ENCODE measurements at regions of chr15 and their contacts with region 1.

Region 1: DNA sequence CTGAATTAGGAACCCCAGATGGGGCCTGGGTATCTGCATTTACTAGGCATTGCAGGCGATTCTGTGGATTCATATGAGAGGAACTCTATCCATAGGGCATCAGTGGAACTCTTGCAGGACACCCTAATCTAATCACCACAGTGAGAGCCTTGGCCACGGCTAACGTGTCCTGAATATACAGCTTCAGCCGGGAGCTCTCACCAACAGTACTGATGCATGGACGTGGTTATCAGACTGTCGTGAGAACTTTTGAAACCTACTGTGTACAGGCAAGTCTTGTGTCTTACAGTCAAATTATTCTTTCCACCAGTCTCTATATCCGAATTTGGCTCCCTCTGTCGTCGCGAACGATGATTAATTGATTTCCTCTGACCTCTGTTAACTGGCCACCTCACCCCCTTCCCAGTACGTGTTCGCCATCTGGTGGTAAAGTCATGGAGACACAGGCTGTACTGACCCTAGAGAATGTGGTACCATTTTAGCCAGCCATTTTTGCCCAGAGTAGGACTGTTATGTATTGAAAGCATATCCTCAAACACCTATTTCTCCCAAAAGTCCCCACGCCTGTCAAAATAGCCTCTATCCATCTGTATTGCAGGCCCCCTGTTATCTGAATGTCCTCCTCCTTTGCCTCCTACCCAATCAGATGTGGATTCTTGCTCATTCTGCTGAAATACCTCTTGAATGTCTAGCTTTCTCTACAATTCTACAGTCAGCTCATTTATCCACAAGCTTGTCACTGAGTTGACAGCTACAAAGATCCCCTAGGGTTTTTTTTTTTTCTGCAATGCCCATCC is 39.7 kb downstream of the GLDN start:
- DNase-seq: peak; percentile 67
- H3K4me3 ChIP-seq: no peak overlapping the region
- H3K27ac ChIP-seq: no peak overlapping the region
- H3K4me1 ChIP-seq: no peaks in the 10 kb centered on the region
- H3K27me3 ChIP-seq: peaks cover 40 to 59% of the 10 kb centered on the region in 2 experiments
- CTCF ChIP-seq: peak; percentile 82 to 87
- POLR2A ChIP-seq: no peak

Region 2: DNA sequence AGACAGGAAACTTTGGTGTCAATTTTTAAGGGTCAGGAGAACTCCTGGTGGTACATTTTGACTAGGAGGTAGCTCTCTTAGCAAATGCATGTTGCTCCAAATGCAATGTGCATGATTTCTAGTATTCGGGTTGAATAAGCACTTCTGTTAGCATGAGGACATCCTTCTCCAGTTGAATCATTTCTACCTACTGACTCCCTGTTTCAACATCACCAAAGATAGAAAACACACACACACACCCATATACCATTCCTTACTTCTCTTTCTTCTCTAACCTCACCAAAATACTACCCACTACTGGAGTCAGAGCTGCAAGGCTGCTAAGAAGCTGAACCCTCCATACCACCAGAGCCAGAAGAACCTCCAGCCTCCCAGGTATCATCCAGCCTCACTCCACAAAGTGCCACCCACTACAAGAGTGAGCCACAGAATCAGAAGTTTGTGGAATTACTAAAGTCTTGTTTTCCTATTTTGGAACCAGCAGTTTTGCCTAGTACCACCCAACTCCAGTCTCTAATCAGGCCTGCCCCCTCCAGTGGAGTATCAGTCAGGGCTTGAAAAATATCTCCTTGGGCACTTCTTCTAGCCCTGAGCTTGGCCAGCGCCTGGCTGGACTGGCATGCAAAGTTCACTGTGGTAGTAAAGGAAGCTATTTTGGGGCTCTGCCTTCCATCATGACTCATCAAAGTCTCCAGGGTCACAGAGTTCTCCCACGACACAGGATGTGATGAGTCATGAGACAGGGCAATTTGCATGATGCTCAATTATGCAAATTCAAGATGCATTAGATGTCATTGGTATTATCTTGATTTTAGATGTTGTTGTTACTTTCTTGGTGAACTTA is 153.0 kb before region 1 on chr15:
- CTCF ChIA-PET with region 1: interaction called, 78 read pairs
- POLR2A ChIA-PET with region 1: no interaction called
- dilution Hi-C with region 1: no loop called
- intact Hi-C with region 1: loop called (anchors 1 kb)
- DNase-seq: peak; percentile 60
- H3K4me3 ChIP-seq: no peak overlapping the region
- H3K27ac ChIP-seq: peak overlapping the region; percentile 11
- H3K4me1 ChIP-seq: peaks cover 27% of the 10 kb centered on the region
- H3K27me3 ChIP-seq: peaks cover 21 to 24% of the 10 kb centered on the region in 2 experiments
- CTCF ChIP-seq: no peak
- POLR2A ChIP-seq: no peak

Region 3: GRCh38 chr15:51335538-51336321 is 45.5 kb before region 1 on chr15:
- CTCF ChIA-PET with region 1: interaction called, 6 read pairs
- POLR2A ChIA-PET with region 1: no interaction called
- dilution Hi-C with region 1: no loop called
- intact Hi-C with region 1: loop called (anchors 2 kb)
- DNase-seq: no peak
- H3K4me3 ChIP-seq: no peak overlapping the region
- H3K27ac ChIP-seq: no peak overlapping the region
- H3K4me1 ChIP-seq: peaks cover 16% of the 10 kb centered on the region
- H3K27me3 ChIP-seq: peaks cover 85 to 87% of the 10 kb centered on the region in 2 experiments
- CTCF ChIP-seq: no peak
- POLR2A ChIP-seq: no peak

Region 4: GRCh38 chr15:51401872-51402517 is 20.8 kb after region 1 on chr15:
- CTCF ChIA-PET with region 1: interaction called, 11 read pairs
- POLR2A ChIA-PET with region 1: no interaction called
- dilution Hi-C with region 1: no loop called
- intact Hi-C with region 1: no loop called
- DNase-seq: peak; percentile 13
- H3K4me3 ChIP-seq: no peak overlapping the region
- H3K27ac ChIP-seq: no peak overlapping the region
- H3K4me1 ChIP-seq: no peaks in the 10 kb centered on the region
- H3K27me3 ChIP-seq: peaks cover 68 to 69% of the 10 kb centered on the region in 2 experiments
- CTCF ChIP-seq: peak; percentile 73 to 83
- POLR2A ChIP-seq: no peak

Region 5: DNA sequence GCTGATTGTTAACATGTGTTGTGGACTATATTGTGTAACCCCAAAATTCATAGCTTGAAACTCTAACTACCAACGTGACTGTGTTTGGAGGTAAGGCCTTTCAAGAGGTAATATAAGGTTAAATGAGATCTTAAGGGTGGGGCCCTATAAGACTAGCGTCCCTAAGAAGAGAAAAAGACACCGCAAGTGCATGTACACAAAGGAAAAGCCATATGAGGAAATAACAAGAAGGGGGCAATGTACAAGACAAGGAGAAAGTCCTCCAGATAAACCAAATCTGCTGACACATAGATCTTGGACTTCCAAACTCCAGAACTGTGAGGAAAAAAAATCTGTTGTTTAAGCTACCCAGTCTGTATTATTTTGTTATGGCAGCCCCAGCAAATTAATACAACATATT is 232.8 kb after region 1 on chr15:
- CTCF ChIA-PET with region 1: no interaction called
- POLR2A ChIA-PET with region 1: no interaction called
- dilution Hi-C with region 1: no loop called
- intact Hi-C with region 1: no loop called
- DNase-seq: no peak
- H3K4me3 ChIP-seq: no peak overlapping the region
- H3K27ac ChIP-seq: no peak overlapping the region
- H3K4me1 ChIP-seq: no peaks in the 10 kb centered on the region
- H3K27me3 ChIP-seq: no peaks in the 10 kb centered on the region
- CTCF ChIP-seq: no peak
- POLR2A ChIP-seq: no peak

Measured in endothelial cell of umbilical vein (primary cell).